ENCODE measurements at regions of chr1 and their contacts with region 1.

Region 1: DNA sequence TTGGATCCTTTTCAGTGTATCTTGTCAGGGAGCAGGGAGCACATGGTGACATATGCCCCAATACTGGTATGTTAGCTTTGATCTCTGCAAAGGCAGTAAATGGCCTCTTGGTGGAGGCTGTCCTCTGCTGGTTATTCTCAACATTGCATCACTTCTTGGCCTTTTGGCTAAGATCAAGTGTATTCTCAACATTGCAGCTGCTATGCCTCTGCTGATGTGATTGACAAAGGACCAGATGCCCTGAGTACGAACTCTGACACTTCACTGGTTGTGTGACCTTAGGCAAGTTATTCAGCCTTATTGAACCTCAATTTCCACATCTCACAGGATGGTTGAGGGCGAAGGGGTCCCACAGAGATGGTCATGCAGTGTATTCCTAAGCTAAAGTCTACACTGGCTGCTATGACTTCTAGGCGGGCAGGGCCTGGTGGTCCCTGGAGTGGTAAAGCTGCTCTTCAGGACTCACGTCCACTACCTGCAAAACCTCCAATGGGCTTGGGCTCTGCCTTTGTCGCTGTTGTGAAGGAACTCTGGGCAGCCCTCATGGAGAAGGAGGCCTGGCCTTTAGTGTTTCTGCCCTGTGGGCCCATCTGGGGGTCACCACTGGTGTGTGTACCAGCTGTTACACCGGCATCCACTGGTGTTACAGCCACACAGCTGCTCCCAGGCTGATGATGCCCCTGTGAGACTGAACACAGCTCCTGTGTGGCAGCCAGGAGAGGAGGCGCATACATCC is 64.8 kb downstream of the DNTTIP2 start:
- DNase-seq: peak; percentile 64
- H3K4me3 Mint-ChIP-seq: no peak overlapping the region
- H3K27ac Mint-ChIP-seq: no peak overlapping the region
- H3K4me1 Mint-ChIP-seq: peaks cover 21% of the 10 kb centered on the region
- H3K27me3 Mint-ChIP-seq: no peaks in the 10 kb centered on the region

Region 2: DNA sequence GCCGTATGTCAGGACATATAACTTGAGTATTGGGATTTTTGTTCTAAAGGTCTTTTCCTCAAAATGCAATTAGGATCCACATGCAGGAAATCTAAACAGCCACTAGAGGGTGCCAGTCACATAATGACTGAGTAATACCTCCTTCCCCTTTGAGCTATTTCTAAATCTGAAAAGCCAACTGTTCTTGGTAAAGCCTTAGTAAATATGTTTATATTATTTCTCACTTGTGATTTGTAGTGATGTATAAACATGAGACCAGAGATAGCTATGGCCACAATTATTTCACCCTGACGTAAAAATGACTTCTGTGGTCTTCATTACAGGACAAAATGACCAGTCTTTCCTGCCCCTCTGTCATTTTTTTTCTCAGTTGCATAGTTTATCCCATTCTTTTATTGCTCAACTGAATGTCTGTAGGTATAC is 509.5 kb before region 1 on chr1:
- CTCF ChIA-PET with region 1: interaction called, 19 read pairs
- POLR2A ChIA-PET with region 1: no interaction called
- intact Hi-C with region 1: no loop called
- DNase-seq: peak; percentile 26
- H3K4me3 Mint-ChIP-seq: no peak overlapping the region
- H3K27ac Mint-ChIP-seq: no peak overlapping the region
- H3K4me1 Mint-ChIP-seq: no peaks in the 10 kb centered on the region
- H3K27me3 Mint-ChIP-seq: no peaks in the 10 kb centered on the region

Region 3: GRCh38 chr1:93607814-93608186 is 206.4 kb before region 1 on chr1:
- CTCF ChIA-PET with region 1: interaction called, 13 read pairs
- POLR2A ChIA-PET with region 1: interaction called, 10 read pairs
- intact Hi-C with region 1: no loop called
- DNase-seq: peak; percentile 85
- H3K4me3 Mint-ChIP-seq: no peak overlapping the region
- H3K27ac Mint-ChIP-seq: peak overlapping the region; percentile 43
- H3K4me1 Mint-ChIP-seq: peaks cover 39% of the 10 kb centered on the region
- H3K27me3 Mint-ChIP-seq: peaks cover 21% of the 10 kb centered on the region

Region 4: DNA sequence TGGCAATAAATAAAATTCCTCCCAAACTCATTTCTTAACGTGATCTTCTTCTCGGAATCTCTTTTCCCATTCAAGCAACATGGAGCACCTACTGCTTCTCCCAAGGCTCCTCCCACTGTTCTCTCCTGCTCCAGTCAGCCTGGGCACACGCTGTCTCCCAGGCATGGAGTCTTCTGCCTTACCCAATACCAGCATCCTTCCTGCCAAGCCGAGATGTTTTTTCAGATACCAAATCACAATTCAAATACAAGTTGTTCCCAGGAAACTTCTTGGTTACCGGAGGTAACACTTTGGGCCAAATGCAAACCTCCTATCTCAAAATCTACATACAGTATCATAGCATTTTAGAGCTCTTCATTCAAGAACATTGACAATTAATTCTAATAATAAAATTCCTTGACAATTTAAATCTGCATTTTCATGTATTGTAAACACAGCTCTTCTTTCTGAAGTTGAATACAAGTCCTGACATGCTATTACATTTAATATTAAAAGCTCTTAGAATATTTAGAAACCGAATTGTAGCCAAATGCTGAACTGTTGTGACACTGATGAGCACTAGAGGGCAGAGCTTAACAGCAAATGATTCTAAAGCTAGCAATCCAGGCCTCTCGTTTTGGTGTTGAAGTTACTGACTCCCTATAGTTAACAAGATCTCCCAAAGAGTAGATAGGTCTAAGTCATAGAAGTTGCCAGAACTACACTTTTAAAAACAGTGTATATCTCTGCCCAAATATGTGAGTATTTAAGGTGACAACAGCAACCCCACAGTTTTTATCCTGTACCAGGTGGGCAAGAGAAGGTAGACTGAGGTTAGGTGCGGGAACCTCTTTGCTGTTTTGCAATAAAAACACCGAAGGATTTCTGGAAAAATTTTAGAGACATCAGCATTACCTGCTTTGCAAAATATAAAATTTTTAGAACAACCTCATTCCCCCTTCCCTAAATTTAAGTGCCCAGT is 184.8 kb before region 1 on chr1:
- CTCF ChIA-PET with region 1: interaction called, 407 read pairs
- POLR2A ChIA-PET with region 1: interaction called, 7 read pairs
- intact Hi-C with region 1: loop called (anchors 1 kb)
- DNase-seq: peak; percentile 43
- H3K4me3 Mint-ChIP-seq: no peak overlapping the region
- H3K27ac Mint-ChIP-seq: no peak overlapping the region
- H3K4me1 Mint-ChIP-seq: no peaks in the 10 kb centered on the region
- H3K27me3 Mint-ChIP-seq: peaks cover 1% of the 10 kb centered on the region

Region 5: DNA sequence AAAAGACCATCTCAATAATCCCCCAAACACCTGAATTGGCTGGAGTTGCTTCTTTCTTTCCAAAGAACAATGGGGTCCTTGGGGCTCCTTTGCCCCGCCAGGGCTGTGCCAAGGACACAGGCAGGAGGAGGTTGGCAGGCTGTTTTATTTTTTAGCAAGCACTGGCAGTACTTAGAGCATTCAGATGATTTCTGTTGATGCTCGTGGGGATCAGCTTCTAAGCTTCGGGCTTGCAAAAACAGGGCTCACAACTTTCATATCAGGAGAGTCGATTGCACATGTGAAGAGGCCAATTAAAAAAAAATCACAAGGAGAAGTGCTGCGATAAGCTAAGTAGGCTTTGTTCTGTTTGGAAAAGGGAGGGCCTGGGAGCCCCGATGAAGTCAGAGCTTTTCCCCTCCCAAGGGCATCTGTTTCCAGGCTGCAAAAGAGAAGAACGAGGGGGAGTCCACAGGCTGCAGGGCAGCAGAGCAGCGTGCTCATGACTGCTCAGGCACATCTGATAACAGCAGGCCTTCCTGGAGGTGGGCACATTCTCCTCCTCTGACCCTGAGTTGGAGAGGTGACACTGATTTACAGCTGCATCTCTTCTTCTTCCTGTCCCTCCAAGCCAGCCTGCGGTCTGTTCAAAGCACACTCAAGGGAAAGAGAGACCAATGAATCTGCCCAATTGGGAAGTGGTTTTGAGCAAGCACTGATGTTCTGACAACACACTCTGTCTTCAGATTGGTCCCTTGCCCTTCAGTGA is 105.3 kb before region 1 on chr1:
- CTCF ChIA-PET with region 1: interaction called, 3 read pairs
- POLR2A ChIA-PET with region 1: no interaction called
- intact Hi-C with region 1: loop called (anchors 2 kb)
- DNase-seq: peak; percentile 31
- H3K4me3 Mint-ChIP-seq: no peak overlapping the region
- H3K27ac Mint-ChIP-seq: no peak overlapping the region
- H3K4me1 Mint-ChIP-seq: peaks cover 40% of the 10 kb centered on the region
- H3K27me3 Mint-ChIP-seq: peaks cover 14% of the 10 kb centered on the region

Measured in activated CD4-positive, alpha-beta memory T cell treated with anti-CD3 and anti-CD28 coated beads for 36 hours (primary cell).